ENCODE measurements at regions of chr13 and their contacts with region 1.

Region 1: GRCh38 chr13:46687810-46688209 is 109.2 kb downstream of the ESD start:
- DNase-seq: no peak
- H3K4me3 ChIP-seq: no peak overlapping the region
- H3K27ac ChIP-seq: no peak overlapping the region
- H3K4me1 ChIP-seq: peaks cover 7 to 31% (median 13%) of the 10 kb centered on the region in 4 donors
- H3K27me3 ChIP-seq: no peaks in the 10 kb centered on the region
- CTCF ChIP-seq: no peak
- EP300 ChIP-seq: no peak
- POLR2A ChIP-seq: no peak

Region 2: GRCh38 chr13:45683701-45684100 is 1004.1 kb before region 1 on chr13:
- in situ Hi-C with region 1: no loop called
- intact Hi-C with region 1: loop called (anchors 5 kb)
- DNase-seq: no peak
- H3K4me3 ChIP-seq: no peak overlapping the region
- H3K27ac ChIP-seq: no peak overlapping the region
- H3K4me1 ChIP-seq: no peaks in the 10 kb centered on the region
- H3K27me3 ChIP-seq: no peaks in the 10 kb centered on the region
- CTCF ChIP-seq: no peak
- EP300 ChIP-seq: no peak
- POLR2A ChIP-seq: no peak

Region 3: GRCh38 chr13:46119883-46120614 is 567.8 kb before region 1 on chr13:
- in situ Hi-C with region 1: no loop called
- intact Hi-C with region 1: loop called (anchors 5 kb)
- DNase-seq: no peak
- H3K4me3 ChIP-seq: no peak overlapping the region
- H3K27ac ChIP-seq: no peak overlapping the region
- H3K4me1 ChIP-seq: no peaks in the 10 kb centered on the region
- H3K27me3 ChIP-seq: no peaks in the 10 kb centered on the region
- CTCF ChIP-seq: no peak
- EP300 ChIP-seq: no peak
- POLR2A ChIP-seq: no peak